ENCODE measurements at regions of chr3 and their contacts with region 1.

Region 1: GRCh38 chr3:72193771-72194463 is 409.0 kb upstream of the PROK2 start:
- DNase-seq: no peak
- H3K4me3 ChIP-seq: no peak overlapping the region
- H3K27ac ChIP-seq: peak overlapping the region; percentile 38 to 53
- H3K4me1 ChIP-seq: no peaks in the 10 kb centered on the region
- H3K27me3 ChIP-seq: no peaks in the 10 kb centered on the region
- CTCF ChIP-seq: no peak
- POLR2A ChIP-seq: no peak

Region 2: DNA sequence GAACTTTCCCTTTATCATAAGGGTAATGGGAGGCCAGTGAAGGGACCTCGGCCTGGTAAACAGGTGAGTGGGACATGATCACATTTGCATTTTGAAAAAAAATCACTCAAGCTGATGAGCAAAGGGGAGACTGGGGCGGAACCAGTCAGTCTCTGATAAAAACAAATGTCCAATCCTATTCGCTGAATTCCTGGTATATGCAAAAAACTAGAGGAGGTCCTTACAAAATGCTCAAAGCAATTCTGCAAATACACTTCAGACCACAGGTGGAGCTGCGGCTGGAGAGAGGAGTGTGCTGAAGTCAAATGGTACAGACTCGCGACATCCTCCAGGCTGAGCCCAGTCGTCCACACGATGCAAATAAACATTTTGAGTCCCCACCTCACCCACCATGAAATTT is 777.0 kb before region 1 on chr3:
- intact Hi-C with region 1: no loop called
- DNase-seq: no peak
- H3K4me3 ChIP-seq: no peak overlapping the region
- H3K27ac ChIP-seq: no peak overlapping the region
- H3K4me1 ChIP-seq: peaks cover 7% of the 10 kb centered on the region
- H3K27me3 ChIP-seq: no peaks in the 10 kb centered on the region
- CTCF ChIP-seq: no peak
- POLR2A ChIP-seq: no peak

Region 3: GRCh38 chr3:72234391-72234790 is 40.5 kb after region 1 on chr3:
- intact Hi-C with region 1: loop called (anchors 5 kb)
- DNase-seq: peak; percentile 33
- H3K4me3 ChIP-seq: no peak overlapping the region
- H3K27ac ChIP-seq: no peak overlapping the region
- H3K4me1 ChIP-seq: peaks cover 11% of the 10 kb centered on the region
- H3K27me3 ChIP-seq: no peaks in the 10 kb centered on the region
- CTCF ChIP-seq: no peak
- POLR2A ChIP-seq: no peak

Measured in prostate gland (tissue), 2 donors.